H1 (cell line): ENCODE measurements at regions of chr6 and their contacts with region 1.

Region 1: DNA sequence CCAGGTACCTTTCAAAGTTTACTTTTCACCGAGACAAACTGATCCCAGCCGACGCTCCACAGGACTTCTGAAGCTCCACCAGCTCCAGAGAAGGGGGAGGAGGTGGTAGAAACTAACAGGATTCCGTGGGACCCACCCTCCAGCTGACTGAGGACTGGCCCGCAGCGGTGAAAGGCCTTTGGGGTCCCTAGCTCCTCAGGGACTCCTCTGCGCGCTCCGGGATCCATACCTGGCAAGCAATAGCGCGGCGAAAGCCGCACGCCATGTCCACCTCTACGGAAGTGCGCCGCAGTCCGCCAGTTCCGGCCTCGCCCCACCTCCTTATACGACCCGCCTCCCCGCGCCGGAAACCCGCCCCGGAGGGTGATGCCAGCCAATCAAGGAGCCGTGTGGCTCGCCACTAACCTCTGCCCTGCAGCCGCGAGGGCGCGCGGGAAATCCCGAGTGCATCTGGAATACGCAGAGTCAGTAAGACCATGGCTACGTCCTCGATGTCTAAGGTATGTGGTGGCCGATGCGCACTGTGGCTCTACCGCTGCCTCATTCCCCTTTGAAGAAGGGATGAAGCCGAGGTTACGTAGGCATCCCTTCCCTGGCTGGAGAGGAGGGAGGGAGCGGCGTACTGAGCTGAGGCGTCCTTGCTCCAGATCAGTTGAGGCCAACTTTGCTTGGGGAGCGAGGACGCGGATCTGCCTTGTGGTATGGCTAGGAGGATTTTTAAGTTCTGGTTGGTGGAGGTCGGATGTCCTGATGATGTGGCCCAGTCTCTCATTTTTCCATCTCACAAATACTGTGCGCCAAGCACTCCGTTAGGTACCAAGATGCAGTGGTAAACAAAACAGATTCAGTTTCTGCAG is at the starts of genes ORC3 and RARS2:
- DNase-seq: peak; percentile 82 to 96
- H3K4me3 ChIP-seq: peak within 1 kb of the TSS; percentile 90 to 100 (median 98)
- H3K27ac ChIP-seq: peak within 1 kb of the TSS; percentile 94
- H3K4me1 ChIP-seq: peaks cover 0 to 3% (median 1%) of the 10 kb centered on the region in 4 experiments; a peak in 2 of 7 replicates
- H3K27me3 ChIP-seq: no peaks in the 10 kb centered on the region
- CTCF ChIP-seq: no peak; a peak in 1 of 4 replicates
- EP300 ChIP-seq: no peak; a peak in 1 of 3 replicates
- POLR2A ChIP-seq: peak; percentile 96 to 97
- RAD21 ChIP-seq: no peak
- total RNA-seq, gene ORC3: 54.4 and 60.9 TPM in 2 replicates
- total RNA-seq, gene RARS2: 38.5 and 40.5 TPM in 2 replicates

Region 2: DNA sequence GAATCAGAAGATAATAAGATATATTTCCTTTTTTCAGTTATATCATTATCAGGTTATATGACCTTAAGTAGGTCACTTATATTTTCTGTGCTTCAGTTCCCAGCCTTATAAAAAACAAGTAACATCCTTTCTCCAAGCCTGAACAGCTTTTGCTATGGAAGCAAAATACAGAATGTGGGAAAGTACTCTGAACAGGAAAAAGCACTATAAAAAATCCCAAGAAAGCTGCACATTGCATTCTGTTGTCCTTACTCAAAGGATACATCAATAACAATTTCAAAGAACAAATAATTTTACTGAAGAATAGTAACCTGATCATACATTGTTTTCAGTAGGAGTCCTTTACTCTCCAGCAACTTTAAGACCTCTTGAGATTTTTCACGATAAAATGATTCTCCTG is 60.7 kb before region 1 on chr6:
- CTCF ChIA-PET with region 1: no interaction called
- POLR2A ChIA-PET with region 1: no interaction called
- DNase-seq: no peak
- H3K4me3 ChIP-seq: no peak overlapping the region
- H3K27ac ChIP-seq: no peak overlapping the region
- H3K4me1 ChIP-seq: no peaks in the 10 kb centered on the region
- H3K27me3 ChIP-seq: no peaks in the 10 kb centered on the region
- CTCF ChIP-seq: no peak
- EP300 ChIP-seq: no peak
- POLR2A ChIP-seq: no peak
- RAD21 ChIP-seq: no peak

Region 3: DNA sequence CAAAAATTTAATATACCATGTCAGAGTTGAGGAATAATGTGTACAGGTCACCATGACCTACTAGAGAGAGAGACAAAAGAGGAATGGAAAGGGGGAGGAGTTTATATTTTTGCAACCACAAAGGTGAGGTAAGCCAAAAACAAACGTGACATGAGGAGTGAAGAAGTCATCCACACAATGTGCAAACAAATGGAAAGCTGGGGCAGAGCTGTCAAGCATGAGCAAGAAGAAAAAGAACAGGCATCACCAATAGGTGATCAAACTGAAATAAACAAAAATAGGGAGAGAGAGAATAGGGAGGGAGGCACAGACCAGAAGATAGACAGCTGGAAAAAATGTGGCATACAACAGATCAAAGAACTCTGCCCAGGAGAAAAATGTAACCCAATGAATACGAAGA is 15.6 kb before region 1 on chr6:
- CTCF ChIA-PET with region 1: interaction called, 4 read pairs
- POLR2A ChIA-PET with region 1: interaction called, 21 read pairs
- DNase-seq: no peak
- H3K4me3 ChIP-seq: no peak overlapping the region
- H3K27ac ChIP-seq: no peak overlapping the region
- H3K4me1 ChIP-seq: peaks cover 0 to 6% (median 5%) of the 10 kb centered on the region in 4 experiments; a peak in 3 of 7 replicates
- H3K27me3 ChIP-seq: no peaks in the 10 kb centered on the region
- CTCF ChIP-seq: no peak
- EP300 ChIP-seq: no peak
- POLR2A ChIP-seq: no peak
- RAD21 ChIP-seq: no peak

Region 4: DNA sequence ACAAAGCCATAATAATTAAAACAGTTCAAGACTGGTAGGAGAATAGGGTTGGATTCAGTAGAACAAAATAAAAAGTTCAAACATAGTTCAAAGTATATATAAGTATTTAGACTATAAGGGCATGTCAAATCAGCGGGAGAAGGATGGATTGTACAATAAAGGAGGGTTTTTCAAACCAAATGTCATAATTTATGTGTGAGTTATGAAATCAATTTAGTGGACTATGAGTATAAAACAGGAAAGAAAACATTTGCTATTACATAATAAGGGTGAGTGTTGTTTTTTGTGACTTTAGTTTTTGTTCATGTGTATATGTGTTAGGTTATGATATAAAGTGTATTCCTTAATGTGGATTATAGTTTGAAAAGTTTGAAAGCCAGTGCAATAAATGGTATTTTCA is 10.7 kb after region 1 on chr6:
- CTCF ChIA-PET with region 1: interaction called, 3 read pairs
- POLR2A ChIA-PET with region 1: interaction called, 30 read pairs
- DNase-seq: no peak
- H3K4me3 ChIP-seq: no peak overlapping the region
- H3K27ac ChIP-seq: no peak overlapping the region
- H3K4me1 ChIP-seq: peaks cover 0 to 4% (median 1%) of the 10 kb centered on the region in 4 experiments; a peak in 3 of 7 replicates
- H3K27me3 ChIP-seq: no peaks in the 10 kb centered on the region
- CTCF ChIP-seq: no peak
- EP300 ChIP-seq: no peak
- POLR2A ChIP-seq: no peak
- RAD21 ChIP-seq: no peak